AG04450 (cell line): ENCODE measurements at regions of chr3 and their contacts with region 1.

Region 1: GRCh38 chr3:8622873-8623691 is 21.5 kb downstream of the SSUH2 start:
- DNase-seq: peak; percentile 36
- H3K4me3 ChIP-seq: no peak overlapping the region
- H3K27ac ChIP-seq: no peak overlapping the region
- H3K27me3 ChIP-seq: no peaks in the 10 kb centered on the region
- CTCF ChIP-seq: peak; percentile 94

Region 2: DNA sequence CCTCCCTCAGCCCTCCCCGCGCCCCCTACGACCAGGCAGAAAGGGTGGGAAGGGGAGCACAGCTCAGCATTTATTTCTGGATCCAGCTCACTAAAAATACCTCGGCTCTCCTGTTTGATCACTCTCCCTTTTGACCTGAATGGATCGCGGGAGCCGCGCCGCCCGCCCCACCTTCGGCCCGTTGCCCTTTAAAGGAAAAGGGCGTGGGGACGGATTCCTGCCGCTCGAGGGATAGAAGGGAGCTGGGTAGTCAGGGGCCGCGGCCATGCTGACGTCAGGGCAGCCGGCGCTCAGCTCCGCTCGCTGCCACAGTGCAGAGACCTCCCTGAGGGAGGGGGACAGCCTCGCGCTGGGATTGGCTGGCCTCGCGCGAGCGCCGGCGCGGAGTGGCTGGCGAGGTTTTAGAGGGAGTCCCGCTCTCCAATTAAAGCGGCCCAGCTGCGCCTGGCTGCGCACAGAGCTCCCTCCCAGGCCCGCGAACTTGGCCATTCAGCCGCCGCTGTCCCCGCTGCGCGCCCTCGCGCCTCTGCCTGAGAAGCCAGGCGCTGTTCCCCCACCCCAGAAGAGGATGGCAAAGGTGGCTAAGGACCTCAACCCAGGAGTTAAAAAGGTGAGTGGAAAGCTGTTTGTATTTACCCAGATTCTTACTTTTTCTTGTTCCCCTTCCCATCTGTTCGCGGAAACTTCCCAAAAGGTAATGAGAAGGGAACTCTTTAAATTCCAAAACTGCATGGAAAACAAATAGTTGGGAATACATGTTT is 121.5 kb before region 1 on chr3 and contains the start of gene LMCD1:
- CTCF ChIA-PET with region 1: interaction called, 5 read pairs
- POLR2A ChIA-PET with region 1: interaction called, 22 read pairs
- DNase-seq: peak; percentile 89
- H3K4me3 ChIP-seq: peak within 1 kb of the TSS; percentile 64
- H3K27ac ChIP-seq: peak within 1 kb of the TSS; percentile 94
- H3K27me3 ChIP-seq: no peaks in the 10 kb centered on the region
- CTCF ChIP-seq: peak; percentile 38
- polyA plus RNA-seq, gene LMCD1: 39.1 and 49.5 TPM in 2 replicates

Region 3: GRCh38 chr3:8555113-8555661 is 67.9 kb before region 1 on chr3:
- CTCF ChIA-PET with region 1: interaction called, 10 read pairs
- POLR2A ChIA-PET with region 1: no interaction called
- DNase-seq: peak; percentile 74
- H3K4me3 ChIP-seq: no peak overlapping the region
- H3K27ac ChIP-seq: peak overlapping the region; percentile 92
- H3K27me3 ChIP-seq: no peaks in the 10 kb centered on the region
- CTCF ChIP-seq: no peak

Region 4: DNA sequence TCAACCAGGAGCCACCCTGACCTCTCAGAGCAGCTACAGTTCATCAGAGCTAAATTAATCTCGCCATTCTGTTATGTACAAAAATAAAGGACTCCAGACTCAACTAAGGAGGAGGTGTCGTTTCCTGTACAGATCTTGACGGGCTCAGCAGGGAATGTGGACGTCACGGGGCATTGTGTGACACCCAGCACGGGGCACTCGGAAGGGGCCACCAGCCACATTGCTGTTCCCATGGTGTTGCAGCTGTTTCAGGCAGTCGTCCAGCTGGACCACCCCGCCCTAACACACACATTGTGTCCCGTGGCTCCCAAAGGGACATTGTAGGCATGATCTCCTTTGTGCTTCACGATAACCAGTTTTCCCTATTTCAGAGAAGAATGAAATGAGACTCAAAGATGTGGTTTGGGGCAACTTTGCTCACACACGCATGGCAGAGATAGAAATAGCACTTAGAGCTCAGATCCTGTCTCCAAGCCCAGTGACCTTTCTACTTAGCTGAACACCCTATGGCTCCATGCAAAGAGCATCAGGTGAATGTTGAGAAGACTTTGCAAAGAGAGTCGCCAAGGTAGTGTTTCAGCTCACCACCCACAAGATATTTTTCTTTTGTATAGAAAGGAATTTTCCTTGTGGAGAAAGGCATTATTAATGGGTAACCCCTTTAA is 16.0 kb after region 1 on chr3:
- CTCF ChIA-PET with region 1: no interaction called
- POLR2A ChIA-PET with region 1: no interaction called
- DNase-seq: no peak
- H3K4me3 ChIP-seq: no peak overlapping the region
- H3K27ac ChIP-seq: no peak overlapping the region
- H3K27me3 ChIP-seq: peaks cover 49% of the 10 kb centered on the region
- CTCF ChIP-seq: no peak

Region 5: DNA sequence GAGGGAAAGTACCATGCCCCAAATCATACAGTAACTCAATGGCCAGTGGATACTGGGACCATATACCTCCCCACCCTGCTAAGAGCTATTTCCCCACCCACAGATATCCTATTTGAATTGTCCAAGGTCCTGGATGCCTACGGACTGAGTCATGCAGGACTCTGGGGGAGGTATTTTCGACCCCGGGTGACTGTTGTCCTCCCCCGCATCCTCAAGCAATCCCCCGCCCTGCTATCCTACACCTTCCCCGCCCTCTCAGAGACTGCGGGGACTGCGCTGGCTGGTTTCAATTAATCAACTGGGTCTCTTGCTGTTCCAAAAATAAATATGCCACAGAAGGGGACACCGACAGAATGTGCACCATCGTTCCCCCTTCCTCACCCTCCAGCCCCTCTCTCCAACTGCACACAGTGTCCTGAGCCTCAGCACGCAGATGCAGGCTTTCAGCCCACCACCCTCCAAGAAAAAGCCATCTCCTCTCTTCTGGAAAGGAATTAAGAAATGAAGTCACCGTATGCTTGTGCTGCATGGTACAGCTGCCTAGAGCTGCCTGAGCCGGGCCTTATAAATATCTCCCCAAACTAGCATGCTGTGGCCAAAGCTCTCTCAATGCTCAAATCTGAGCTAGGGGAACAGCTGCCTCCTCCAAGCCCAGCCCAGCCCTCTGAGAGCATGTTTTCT is 118.6 kb after region 1 on chr3:
- CTCF ChIA-PET with region 1: no interaction called
- POLR2A ChIA-PET with region 1: interaction called, 10 read pairs
- DNase-seq: peak; percentile 59
- H3K4me3 ChIP-seq: peak overlapping the region; percentile 35
- H3K27ac ChIP-seq: peak overlapping the region; percentile 78
- H3K27me3 ChIP-seq: no peaks in the 10 kb centered on the region
- CTCF ChIP-seq: no peak

Region 6: DNA sequence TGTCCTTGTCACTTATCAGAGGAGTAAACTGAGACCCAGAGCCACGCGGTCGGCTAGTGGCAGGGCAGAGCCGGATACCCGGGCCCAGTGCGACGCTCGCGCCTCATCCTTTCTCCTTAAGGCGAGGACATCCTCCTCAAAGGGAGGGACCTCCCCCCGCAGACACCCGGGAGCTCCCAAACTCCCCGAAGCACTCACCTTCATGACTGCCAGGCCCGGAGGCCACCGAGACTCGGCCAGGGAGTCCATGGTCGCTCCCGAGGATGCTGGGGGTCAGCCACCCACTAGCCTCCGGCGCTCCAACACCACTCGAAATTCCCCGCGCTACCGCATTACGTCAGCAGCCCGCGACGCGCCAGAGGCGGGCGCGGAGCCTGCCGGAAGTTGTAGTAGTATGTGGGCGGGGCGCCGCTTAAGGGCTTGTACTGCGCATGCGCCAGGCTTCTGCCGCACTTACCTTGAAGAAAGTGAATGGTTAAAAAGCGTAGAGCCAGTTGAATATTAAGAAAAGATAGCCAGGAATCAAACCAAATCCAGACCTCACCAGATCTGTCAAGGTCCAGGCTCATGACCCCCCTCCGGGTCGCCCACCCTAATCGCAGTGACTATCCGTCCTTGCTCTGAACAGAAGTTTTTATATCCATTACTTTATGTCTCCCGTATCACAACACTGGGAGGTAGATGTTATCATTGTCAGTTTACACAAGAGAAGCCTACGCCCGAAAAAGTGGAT is 340.2 kb after region 1 on chr3 and contains the start of gene RAD18:
- CTCF ChIA-PET with region 1: no interaction called
- POLR2A ChIA-PET with region 1: no interaction called
- DNase-seq: peak; percentile 79
- H3K4me3 ChIP-seq: peak within 1 kb of the TSS; percentile 87
- H3K27ac ChIP-seq: peak within 1 kb of the TSS; percentile 55
- H3K27me3 ChIP-seq: no peaks in the 10 kb centered on the region
- CTCF ChIP-seq: no peak
- polyA plus RNA-seq, gene RAD18: 6.7 and 10.7 TPM in 2 replicates